GM23248 (cell line): ENCODE measurements at regions of chr2 and their contacts with region 1.

Region 1: DNA sequence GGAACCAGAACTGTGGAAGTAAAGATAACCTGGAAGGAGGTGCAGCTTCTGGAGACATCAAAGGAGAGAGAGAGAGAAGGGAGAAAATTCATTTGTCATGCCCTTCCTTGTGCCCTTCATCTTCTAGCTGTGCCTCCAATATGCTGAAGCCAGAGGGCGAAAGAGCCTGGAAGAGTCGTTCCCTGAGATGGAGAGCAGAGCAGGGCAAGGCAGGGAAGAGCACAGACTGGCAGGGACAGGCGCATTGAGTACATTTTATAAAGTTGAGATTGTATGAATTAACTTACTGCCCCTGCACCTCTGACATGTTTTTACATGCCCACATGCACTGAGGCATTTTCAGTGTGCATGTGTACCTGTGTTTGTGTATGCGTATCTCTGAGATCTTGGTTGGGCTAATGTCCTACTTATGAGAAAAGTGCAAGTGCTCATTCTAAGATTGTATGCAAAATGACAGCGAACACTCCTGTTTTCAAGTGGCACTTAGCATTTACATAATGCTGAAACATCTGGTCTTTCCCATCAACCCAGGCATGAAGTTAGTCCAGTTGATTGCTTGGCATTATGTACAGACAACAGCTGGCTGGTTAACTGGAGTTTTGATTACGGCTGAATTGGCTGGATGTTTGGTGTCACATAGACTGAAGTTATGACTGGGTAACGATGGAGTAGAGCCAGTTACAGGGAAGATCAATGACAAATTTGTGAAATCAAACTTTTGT is 23.7 kb upstream of the MMADHC start:
- DNase-seq: no peak
- H3K4me3 ChIP-seq: no peak overlapping the region
- H3K27ac ChIP-seq: no peak overlapping the region
- H3K4me1 ChIP-seq: peaks cover 19% of the 10 kb centered on the region
- H3K27me3 ChIP-seq: no peaks in the 10 kb centered on the region

Region 2: DNA sequence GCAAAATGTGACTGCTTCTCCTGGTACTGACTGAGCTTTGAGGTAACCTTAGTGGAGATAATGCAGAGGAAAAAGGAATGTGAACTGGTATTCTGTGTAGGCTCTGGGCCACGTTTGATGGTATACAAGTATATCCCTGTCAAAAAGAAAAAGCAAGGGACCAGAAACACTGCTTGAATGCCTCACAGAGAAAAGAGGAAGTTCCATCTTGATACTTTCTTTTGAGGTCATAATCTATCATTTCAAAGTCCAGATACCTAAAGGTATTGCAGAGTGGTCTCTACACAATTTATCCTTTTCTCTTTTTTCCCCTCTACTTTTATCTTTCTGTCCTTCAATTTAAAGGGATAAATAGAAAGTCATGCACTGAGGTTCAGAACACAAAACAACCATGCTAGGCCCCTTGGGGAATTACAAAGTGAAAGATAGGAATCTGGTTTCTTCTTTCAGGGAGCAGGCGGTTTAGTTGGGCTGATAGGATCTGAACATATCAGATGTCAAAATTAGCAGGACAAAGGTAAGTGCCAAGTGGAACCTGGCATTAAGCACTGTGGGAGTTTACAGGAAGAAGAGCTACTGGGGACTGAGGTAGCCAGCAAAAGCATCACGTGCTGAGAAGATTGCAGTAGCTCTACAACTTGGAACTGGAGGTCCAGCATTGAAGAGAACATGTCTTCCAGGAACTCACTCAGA is 159.7 kb before region 1 on chr2:
- in situ Hi-C with region 1: no loop called
- DNase-seq: no peak
- H3K4me3 ChIP-seq: no peak overlapping the region
- H3K27ac ChIP-seq: no peak overlapping the region
- H3K4me1 ChIP-seq: no peaks in the 10 kb centered on the region
- H3K27me3 ChIP-seq: no peaks in the 10 kb centered on the region

Region 3: DNA sequence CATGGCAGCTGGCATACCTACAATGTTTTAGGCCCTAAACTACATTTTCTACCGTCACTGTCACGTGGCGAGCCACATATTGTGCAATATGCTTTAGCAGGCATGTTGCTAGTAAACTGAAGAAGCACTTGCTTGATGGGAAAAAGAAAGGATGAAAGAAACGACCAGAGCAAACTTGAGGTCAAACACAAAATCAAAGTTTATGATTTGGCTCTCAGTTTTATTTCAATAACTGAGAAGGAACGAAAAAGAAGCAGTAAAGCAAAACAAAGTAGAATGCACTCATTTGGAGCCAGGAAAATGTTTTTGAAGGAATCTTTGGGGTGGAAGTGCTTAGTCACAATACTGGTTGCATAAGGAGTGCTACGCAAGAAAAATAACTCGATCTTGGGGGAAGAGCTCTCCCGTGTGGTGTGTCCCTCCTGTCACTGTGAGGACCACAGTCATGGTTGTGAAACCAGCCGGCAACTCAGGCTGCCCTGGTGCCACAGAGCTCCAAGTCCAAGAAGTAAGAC is 1300.6 kb after region 1 on chr2:
- in situ Hi-C with region 1: loop called (anchors 25 kb)
- DNase-seq: peak; percentile 94
- H3K4me3 ChIP-seq: peak overlapping the region; percentile 62
- H3K27ac ChIP-seq: peak overlapping the region; percentile 90
- H3K4me1 ChIP-seq: peaks cover 16% of the 10 kb centered on the region
- H3K27me3 ChIP-seq: no peaks in the 10 kb centered on the region